Posterior vena cava (tissue), 2 donors: ENCODE measurements at regions of chr17 and their contacts with region 1.

Region 1: DNA sequence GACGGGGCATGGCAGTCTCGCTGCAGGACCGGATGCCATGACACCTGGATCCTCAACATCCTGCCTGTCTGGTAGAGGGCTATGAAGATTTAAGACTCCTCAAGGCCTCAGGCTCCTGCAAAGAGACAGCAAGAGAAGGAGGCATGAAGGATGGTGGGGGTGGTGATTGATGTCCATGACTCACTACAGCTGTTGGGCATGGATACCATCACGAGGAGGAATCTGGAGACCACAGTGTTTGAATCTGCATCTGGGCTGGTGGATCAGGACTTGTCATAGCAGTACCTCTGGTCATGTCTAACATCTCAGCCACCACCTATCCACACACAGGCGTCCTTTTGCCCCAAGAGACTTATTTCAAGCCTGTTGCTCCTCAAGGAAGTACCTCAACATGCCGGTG is 50.2 kb upstream of the WSCD1 start:
- DNase-seq: no peak

Region 2: DNA sequence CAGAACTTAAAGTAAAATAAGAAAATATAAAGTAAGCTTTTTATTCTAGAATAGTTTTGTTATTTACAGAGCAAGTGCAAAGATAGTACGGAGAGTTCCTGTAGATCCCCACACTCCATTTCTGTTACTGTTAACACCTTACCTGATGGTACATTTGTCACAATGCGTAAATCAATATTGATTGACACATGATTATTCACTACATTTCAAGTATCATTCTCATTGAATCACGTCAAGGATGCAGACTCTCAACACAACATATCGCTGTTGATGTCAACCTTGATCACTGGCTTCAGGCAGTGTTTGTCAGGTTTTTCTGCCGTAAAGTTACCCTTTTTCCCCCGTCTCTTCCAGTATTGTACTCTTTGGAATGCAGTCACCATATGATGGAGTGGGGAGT is 14.0 kb before region 1 on chr17:
- intact Hi-C with region 1: no loop called
- DNase-seq: no peak

Region 3: GRCh38 chr17:6040504-6040903 is 20.5 kb after region 1 on chr17:
- intact Hi-C with region 1: loop called in 1 of 2 experiments (anchors 2 kb)
- DNase-seq: no peak